Ovary (tissue), 10 donors: ENCODE measurements at regions of chr17 and their contacts with region 1.

Region 1: DNA sequence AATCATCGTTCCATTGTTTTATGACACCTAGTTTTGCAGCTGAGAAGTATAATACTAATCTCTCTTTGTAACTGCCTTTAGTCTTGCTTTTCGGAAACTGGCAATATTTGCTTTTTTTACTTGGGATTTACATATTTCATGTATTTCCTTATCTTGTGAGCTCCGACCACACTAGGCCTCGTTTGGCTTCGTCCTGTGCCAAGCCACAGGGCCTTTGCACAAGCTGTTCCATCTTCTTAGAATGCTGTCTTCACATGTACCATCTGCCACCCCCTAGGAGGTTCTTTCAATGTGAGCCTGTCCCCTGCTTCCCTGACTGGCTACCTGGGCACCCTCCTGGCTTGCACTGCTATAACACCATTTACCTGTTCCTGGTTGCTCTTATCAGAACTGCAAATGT is 77.2 kb downstream of the SHISA6 start:
- DNase-seq: no peak
- H3K4me3 ChIP-seq: no peak overlapping the region
- H3K27ac ChIP-seq: no peak overlapping the region
- H3K4me1 ChIP-seq: no peaks in the 10 kb centered on the region
- H3K27me3 ChIP-seq: no peaks in the 10 kb centered on the region
- CTCF ChIP-seq: no peak
- EP300 ChIP-seq: no peak
- POLR2A ChIP-seq: no peak

Region 2: GRCh38 chr17:10705727-10706126 is 612.5 kb before region 1 on chr17:
- intact Hi-C with region 1: loop called in 1 of 4 experiments (anchors 5 kb)
- DNase-seq: no peak
- H3K4me3 ChIP-seq: no peak overlapping the region
- H3K27ac ChIP-seq: no peak overlapping the region
- H3K4me1 ChIP-seq: peaks cover 3% of the 10 kb centered on the region
- H3K27me3 ChIP-seq: no peaks in the 10 kb centered on the region
- CTCF ChIP-seq: no peak
- EP300 ChIP-seq: no peak
- POLR2A ChIP-seq: no peak

Region 3: DNA sequence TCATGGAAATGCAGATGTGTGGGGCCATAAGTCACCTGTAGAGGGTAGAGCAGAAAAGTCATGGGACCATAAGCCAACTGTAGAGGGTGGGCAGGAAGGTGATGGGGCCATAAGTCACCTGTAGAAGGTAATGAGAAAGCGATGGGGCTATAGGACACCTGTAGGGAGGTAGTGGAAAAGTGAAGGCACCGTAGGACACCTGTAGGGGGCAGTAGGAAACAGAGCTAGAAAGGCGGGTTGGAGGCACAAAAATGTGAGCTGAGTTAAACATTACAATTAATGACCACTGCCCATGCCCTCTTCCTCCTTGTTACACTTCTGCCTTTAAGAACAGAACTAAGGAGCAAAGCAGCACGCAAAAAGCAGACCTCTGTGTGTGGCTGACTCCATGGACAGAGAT is 72.9 kb after region 1 on chr17:
- intact Hi-C with region 1: no loop called
- DNase-seq: no peak
- H3K4me3 ChIP-seq: no peak overlapping the region
- H3K27ac ChIP-seq: no peak overlapping the region
- H3K4me1 ChIP-seq: no peaks in the 10 kb centered on the region
- H3K27me3 ChIP-seq: no peaks in the 10 kb centered on the region
- CTCF ChIP-seq: no peak
- EP300 ChIP-seq: no peak
- POLR2A ChIP-seq: no peak

Region 4: GRCh38 chr17:11515901-11516300 is 197.7 kb after region 1 on chr17:
- intact Hi-C with region 1: no loop called
- DNase-seq: no peak
- H3K4me3 ChIP-seq: no peak overlapping the region
- H3K27ac ChIP-seq: no peak overlapping the region
- H3K4me1 ChIP-seq: peaks cover 3% of the 10 kb centered on the region
- H3K27me3 ChIP-seq: no peaks in the 10 kb centered on the region
- CTCF ChIP-seq: no peak
- EP300 ChIP-seq: no peak
- POLR2A ChIP-seq: no peak